ENCODE measurements at regions of chr14 and their contacts with region 1.

Region 1: GRCh38 chr14:69242311-69243224 is 17.4 kb upstream of the GALNT16 start:
- DNase-seq: peak; percentile 81
- ATAC-seq: peak; percentile 87
- H3K4me3 Mint-ChIP-seq: no peak overlapping the region
- H3K27ac Mint-ChIP-seq: no peak overlapping the region
- H3K4me1 Mint-ChIP-seq: no peaks in the 10 kb centered on the region
- H3K27me3 Mint-ChIP-seq: no peaks in the 10 kb centered on the region
- CTCF ChIP-seq: peak; percentile 91

Region 2: DNA sequence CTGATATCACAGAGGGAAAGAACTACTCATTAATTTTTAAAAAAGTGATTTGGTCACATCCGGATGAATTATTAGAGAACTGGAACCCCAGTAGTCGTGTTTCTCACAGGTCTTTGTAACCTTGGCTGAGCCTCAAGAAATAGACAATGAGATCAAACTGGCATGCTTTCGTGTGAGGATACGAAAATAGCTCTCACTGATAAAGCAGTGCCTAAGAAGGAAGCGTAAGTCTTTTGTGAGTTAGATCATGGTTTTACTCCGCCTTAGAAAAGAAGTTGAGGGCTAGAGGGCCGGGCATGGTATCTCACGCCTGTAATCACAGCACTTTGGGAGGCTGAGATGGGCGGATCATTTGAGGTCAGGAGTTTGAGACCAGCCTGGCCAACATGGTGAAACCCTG is 16.4 kb before region 1 on chr14:
- CTCF ChIA-PET with region 1: interaction called, 22 read pairs
- POLR2A ChIA-PET with region 1: no interaction called
- intact Hi-C with region 1: no loop called
- DNase-seq: no peak
- ATAC-seq: no peak
- H3K4me3 Mint-ChIP-seq: no peak overlapping the region
- H3K27ac Mint-ChIP-seq: no peak overlapping the region
- H3K4me1 Mint-ChIP-seq: no peaks in the 10 kb centered on the region
- H3K27me3 Mint-ChIP-seq: no peaks in the 10 kb centered on the region
- CTCF ChIP-seq: no peak

Region 3: GRCh38 chr14:69257501-69257900 is 14.9 kb after region 1 on chr14:
- CTCF ChIA-PET with region 1: interaction called, 46 read pairs
- POLR2A ChIA-PET with region 1: no interaction called
- intact Hi-C with region 1: no loop called
- DNase-seq: no peak
- ATAC-seq: no peak
- H3K4me3 Mint-ChIP-seq: no peak overlapping the region
- H3K27ac Mint-ChIP-seq: no peak overlapping the region
- H3K4me1 Mint-ChIP-seq: peaks cover 6% of the 10 kb centered on the region
- H3K27me3 Mint-ChIP-seq: peaks cover 37% of the 10 kb centered on the region
- CTCF ChIP-seq: no peak

Region 4: DNA sequence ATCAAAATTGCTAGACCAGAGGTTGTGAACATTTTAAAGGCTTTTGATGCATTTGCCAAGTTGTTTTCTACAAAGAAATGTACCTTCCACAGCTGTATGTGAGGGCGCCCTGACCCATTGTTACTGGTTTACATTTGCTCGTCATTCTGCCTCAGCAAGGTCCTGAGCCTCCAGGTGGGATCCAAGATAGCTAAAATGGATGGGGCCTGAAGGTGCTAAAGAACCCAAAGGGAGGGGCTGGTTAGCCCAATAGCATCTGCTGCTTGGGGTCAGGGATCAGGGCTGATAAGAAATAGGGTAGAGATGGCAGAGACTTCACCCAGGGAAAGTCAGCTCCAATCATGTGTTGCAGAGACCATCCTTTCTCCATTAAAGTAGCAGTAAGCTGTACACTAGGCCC is 60.5 kb after region 1 on chr14:
- CTCF ChIA-PET with region 1: no interaction called
- POLR2A ChIA-PET with region 1: no interaction called
- intact Hi-C with region 1: no loop called
- DNase-seq: no peak
- ATAC-seq: no peak
- H3K4me3 Mint-ChIP-seq: no peak overlapping the region
- H3K27ac Mint-ChIP-seq: no peak overlapping the region
- H3K4me1 Mint-ChIP-seq: peaks cover 5% of the 10 kb centered on the region
- H3K27me3 Mint-ChIP-seq: peaks cover 10% of the 10 kb centered on the region
- CTCF ChIP-seq: no peak

Region 5: DNA sequence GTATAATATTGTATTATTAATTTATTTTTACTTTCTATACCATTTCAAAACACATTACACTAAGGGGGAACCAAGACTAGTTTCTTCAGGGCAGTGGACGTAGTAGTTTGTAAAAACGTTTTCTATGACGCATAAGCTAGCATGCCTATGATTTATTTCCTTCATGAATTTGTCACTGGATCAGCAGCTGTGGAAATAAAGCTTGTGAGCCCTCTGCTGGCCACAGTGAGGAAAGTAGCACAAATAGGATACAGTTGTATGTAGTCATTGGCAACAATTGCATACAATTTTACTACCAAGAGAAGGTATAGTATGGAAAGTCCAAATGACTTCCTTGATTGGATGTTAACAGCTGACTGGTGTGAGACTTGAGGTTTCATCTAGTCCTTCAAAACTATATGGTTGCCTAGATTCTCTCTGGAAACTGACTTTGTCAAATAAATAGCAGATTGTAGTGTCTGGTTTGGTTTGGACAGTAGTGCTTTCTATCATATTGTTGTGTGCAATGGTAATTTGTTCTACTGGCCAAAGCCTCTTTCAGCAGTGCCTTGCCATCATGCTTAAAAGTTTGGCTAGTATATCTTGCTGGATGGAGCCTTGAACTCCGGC is 217.6 kb after region 1 on chr14:
- CTCF ChIA-PET with region 1: interaction called, 79 read pairs
- POLR2A ChIA-PET with region 1: no interaction called
- intact Hi-C with region 1: loop called (anchors 5 kb)
- DNase-seq: peak; percentile 79
- ATAC-seq: peak; percentile 91
- H3K4me3 Mint-ChIP-seq: no peak overlapping the region
- H3K27ac Mint-ChIP-seq: no peak overlapping the region
- H3K4me1 Mint-ChIP-seq: no peaks in the 10 kb centered on the region
- H3K27me3 Mint-ChIP-seq: no peaks in the 10 kb centered on the region
- CTCF ChIP-seq: peak; percentile 77

Region 6: DNA sequence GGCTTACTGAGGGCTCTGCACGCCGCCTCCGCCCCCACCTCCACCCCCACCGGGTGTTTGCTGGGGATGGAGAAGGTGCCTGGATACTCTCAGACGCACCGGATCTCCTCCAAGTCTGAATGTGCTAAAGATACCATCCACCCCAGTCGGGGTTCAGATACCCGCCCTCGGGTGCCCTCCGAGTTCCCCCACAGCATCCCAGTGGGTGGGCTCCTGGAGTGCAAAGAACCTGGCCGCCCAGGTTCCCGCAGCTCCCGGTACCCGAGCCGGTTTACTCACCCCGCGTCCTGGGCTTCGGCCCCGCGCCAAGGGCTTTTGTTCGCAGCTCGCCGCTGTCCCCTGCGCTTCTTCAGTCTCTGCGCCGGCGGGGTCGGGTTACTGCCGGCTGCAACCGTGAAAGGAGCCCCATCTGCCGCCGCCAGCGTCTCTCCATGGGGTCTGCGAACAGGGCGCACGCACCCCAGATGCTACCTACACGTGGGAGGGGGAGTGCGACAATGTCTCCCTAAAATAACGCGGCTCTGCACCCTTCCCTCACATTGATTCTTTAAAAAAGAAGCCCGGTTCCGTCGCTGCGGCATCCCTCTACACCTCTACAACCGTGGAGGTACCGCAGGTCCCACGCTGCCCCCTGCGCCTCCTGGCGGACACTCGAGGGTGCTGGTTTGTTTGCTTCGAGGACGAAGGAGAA is 331.8 kb after region 1 on chr14 and contains the start of gene CCDC177:
- CTCF ChIA-PET with region 1: interaction called, 51 read pairs
- POLR2A ChIA-PET with region 1: no interaction called
- intact Hi-C with region 1: loop called (anchors 2 kb)
- DNase-seq: peak; percentile 81
- ATAC-seq: peak; percentile 82
- H3K4me3 Mint-ChIP-seq: peak within 1 kb of the TSS; percentile 68
- H3K27ac Mint-ChIP-seq: no peak within 1 kb of the TSS
- H3K4me1 Mint-ChIP-seq: peaks cover 5% of the 10 kb centered on the region
- H3K27me3 Mint-ChIP-seq: peaks cover 49% of the 10 kb centered on the region
- CTCF ChIP-seq: peak; percentile 97
- total RNA-seq, gene CCDC177: not detected